Activated T-helper 2 cell treated with anti-CD3 and anti-CD28 coated beads, Interferon-gamma antibody, Interleukin-2, Interleukin-4, amounts not matched to agents 10 μg/mL and 5 μg/mL and 100 μg/mL, durations not matched to agents 14 hours and 24 hours and 36 hours (primary cell): ENCODE measurements at regions of chr12 and their contacts with region 1.

Region 1: GRCh38 chr12:751192-751998 is 984 bp upstream of the WNK1 start:
- DNase-seq: peak; percentile 87
- H3K4me3 Mint-ChIP-seq: no peak overlapping the region
- H3K27ac Mint-ChIP-seq: no peak overlapping the region
- H3K4me1 Mint-ChIP-seq: peaks cover 28% of the 10 kb centered on the region
- H3K27me3 Mint-ChIP-seq: no peaks in the 10 kb centered on the region

Region 2: GRCh38 chr12:575948-576612 is 175.3 kb before region 1 on chr12:
- intact Hi-C with region 1: loop called (anchors 1 kb)
- DNase-seq: peak; percentile 80
- H3K4me3 Mint-ChIP-seq: no peak overlapping the region
- H3K27ac Mint-ChIP-seq: peak overlapping the region; percentile 74
- H3K4me1 Mint-ChIP-seq: peaks cover 25% of the 10 kb centered on the region
- H3K27me3 Mint-ChIP-seq: peaks cover 3% of the 10 kb centered on the region

Region 3: DNA sequence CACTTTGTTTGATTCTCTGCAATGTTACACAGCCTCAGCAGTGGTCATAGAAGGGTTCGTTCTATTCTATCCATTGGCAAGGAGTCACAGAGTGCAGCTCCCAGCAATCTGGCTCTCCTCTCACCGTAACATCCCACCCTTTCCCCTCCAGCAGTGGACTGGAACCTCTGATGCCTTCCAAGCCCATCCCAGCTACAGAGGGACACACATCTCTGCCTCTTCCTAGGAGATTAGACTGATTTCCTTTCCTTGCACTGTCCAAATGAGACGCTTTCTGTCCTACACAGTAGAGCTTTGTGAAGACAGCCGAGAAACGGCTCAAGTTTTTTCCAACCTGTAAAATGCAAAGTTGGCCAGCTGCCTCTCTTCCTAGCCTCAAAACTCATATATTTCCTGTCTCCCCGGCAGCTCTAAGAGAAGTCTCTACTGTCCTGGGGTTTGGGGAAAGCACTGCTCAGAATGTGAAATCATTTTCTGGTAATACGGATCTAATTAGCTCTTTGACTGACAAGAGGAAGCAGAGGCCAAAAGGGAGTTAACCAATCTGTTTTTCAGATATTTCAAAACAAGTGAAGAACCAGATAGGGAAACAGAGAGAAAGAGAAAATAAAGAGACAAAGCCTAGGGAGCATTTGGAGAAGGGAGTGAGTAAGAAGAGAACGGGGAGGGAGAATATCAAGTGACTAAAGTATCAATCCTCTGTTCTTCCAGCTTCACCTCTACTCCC is 88.7 kb before region 1 on chr12:
- intact Hi-C with region 1: no loop called
- DNase-seq: no peak
- H3K4me3 Mint-ChIP-seq: peak overlapping the region; percentile 49
- H3K27ac Mint-ChIP-seq: peak overlapping the region; percentile 68
- H3K4me1 Mint-ChIP-seq: peaks cover 35% of the 10 kb centered on the region
- H3K27me3 Mint-ChIP-seq: peaks cover 5% of the 10 kb centered on the region

Region 4: GRCh38 chr12:674272-674781 is 77.1 kb before region 1 on chr12:
- intact Hi-C with region 1: loop called (anchors 1 kb)
- DNase-seq: peak; percentile 74
- H3K4me3 Mint-ChIP-seq: peak overlapping the region; percentile 58
- H3K27ac Mint-ChIP-seq: peak overlapping the region; percentile 69
- H3K4me1 Mint-ChIP-seq: peaks cover 65% of the 10 kb centered on the region
- H3K27me3 Mint-ChIP-seq: no peaks in the 10 kb centered on the region

Region 5: GRCh38 chr12:712172-712863 is 39.1 kb before region 1 on chr12:
- intact Hi-C with region 1: loop called (anchors 2 kb)
- DNase-seq: no peak
- H3K4me3 Mint-ChIP-seq: no peak overlapping the region
- H3K27ac Mint-ChIP-seq: peak overlapping the region; percentile 70
- H3K4me1 Mint-ChIP-seq: peaks cover 29% of the 10 kb centered on the region
- H3K27me3 Mint-ChIP-seq: no peaks in the 10 kb centered on the region

Region 6: DNA sequence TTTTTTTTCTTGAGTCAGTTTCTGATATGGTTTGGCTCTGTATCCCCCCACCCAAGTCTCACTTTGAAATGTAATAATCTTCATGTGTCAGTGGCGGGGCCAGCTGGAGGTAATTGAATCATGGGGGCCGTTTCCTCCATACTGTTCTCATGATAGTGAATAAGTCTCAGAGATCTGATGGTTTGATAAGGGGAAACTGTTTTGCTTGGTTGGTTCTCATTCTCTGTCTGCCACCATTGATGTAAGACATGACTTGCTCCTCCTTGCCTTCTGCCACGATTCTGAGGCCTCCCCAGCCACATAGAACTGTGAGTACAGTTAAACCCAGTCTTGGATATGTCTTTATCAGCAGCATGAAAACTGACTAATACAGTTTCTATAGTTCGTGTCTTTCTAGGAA is 43.9 kb after region 1 on chr12:
- intact Hi-C with region 1: loop called (anchors 1 kb)
- DNase-seq: peak; percentile 51
- H3K4me3 Mint-ChIP-seq: peak overlapping the region; percentile 48
- H3K27ac Mint-ChIP-seq: peak overlapping the region; percentile 94
- H3K4me1 Mint-ChIP-seq: peaks cover 58% of the 10 kb centered on the region
- H3K27me3 Mint-ChIP-seq: no peaks in the 10 kb centered on the region

Region 7: GRCh38 chr12:835754-836518 is 84.5 kb after region 1 on chr12:
- intact Hi-C with region 1: no loop called
- DNase-seq: no peak
- H3K4me3 Mint-ChIP-seq: no peak overlapping the region
- H3K27ac Mint-ChIP-seq: no peak overlapping the region
- H3K4me1 Mint-ChIP-seq: peaks cover 19% of the 10 kb centered on the region
- H3K27me3 Mint-ChIP-seq: no peaks in the 10 kb centered on the region

Region 8: DNA sequence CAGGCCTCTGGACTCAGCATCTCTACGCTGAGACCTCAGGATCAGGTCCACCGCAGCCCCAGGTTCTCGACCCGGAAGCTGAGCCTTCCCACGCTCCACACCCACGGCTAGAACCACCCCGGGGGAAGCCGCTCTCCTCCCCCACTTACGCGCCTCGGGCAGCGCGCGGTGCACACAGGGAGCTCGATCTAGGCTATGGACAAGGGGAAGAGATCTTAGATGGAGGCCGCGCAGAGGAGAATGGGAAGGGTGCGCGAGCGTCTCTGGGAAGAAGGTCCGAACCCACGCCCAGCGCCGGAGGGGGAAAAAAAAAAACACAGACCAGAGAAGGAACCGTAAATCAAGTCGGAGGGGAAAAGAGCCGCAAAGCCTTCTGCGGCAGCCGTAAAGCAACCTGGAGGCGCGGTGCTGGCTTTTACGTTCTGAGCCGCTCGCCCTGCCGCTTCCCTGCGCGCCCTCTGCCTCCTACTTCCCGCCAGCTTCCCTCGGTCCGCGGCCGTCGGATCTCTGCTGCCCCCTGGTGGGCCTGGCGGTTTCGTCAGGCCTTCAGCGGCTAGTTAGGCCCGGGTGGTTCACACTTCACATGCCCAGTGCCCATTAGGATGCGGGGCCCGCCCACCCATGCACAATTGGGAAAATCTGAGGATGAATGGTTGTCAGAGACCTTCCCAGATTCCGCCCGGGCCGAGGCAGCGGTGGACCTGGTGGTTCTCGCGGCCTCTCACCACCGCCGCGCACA is 198.2 kb after region 1 on chr12 and contains the start of gene RAD52:
- intact Hi-C with region 1: loop called (anchors 1 kb)
- DNase-seq: peak; percentile 96
- H3K4me3 Mint-ChIP-seq: peak within 1 kb of the TSS; percentile 96
- H3K27ac Mint-ChIP-seq: peak within 1 kb of the TSS; percentile 96
- H3K4me1 Mint-ChIP-seq: peaks cover 31% of the 10 kb centered on the region
- H3K27me3 Mint-ChIP-seq: no peaks in the 10 kb centered on the region
- total RNA-seq, gene RAD52: 14.5 and 15.3 TPM in 2 replicates

Region 9: DNA sequence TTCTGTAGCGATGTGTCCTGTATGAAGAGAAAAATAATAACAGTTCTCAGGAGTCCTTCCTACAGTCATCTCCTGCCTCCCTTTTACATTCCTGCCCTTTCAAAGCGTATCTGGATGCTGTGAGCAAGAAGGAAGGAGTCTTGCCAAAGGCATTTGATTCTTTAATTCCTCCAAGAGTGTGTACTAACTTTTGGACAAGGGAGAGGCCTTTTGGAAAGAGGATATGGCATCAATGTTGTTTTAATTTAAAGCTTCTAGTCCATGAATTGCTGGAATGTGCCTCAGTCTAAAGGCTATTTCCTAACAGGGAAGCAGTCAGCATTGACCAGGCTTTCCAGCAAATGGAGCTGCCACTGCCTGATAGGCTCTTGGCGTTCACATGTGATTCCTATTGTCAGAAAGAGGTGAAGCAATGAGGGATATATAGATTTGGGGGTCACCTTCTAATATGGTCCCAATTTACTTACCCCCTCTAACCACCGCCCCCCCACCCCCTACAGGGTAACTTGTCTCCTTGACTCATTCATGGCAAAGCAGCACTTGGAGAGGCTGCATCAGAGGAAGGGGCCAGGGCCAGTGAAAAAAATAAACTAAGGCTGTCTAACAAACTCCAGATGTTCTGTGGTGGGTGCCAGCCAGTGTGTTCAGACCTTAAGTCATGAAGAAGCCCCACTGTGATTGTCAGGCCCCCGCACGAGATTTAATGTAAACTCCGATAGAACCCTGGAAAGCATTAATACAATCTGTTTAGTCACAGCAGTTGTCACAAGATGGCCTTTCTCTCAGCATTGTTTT is 622.7 kb after region 1 on chr12:
- intact Hi-C with region 1: no loop called
- DNase-seq: no peak
- H3K4me3 Mint-ChIP-seq: no peak overlapping the region
- H3K27ac Mint-ChIP-seq: no peak overlapping the region
- H3K4me1 Mint-ChIP-seq: no peaks in the 10 kb centered on the region
- H3K27me3 Mint-ChIP-seq: no peaks in the 10 kb centered on the region